ENCODE measurements at regions of chr5 and their contacts with region 1.

Region 1: GRCh38 chr5:5492087-5492933 is 69.8 kb downstream of the ICE1 start:
- DNase-seq: peak in 7 of 9 experiments; percentile 4 to 78 (median 38)
- ATAC-seq: peak; percentile 35
- H3K4me3 ChIP-seq: no peak overlapping the region
- H3K4me3 Mint-ChIP-seq: peak overlapping the region; percentile 66
- H3K27ac ChIP-seq: no peak overlapping the region
- H3K27ac Mint-ChIP-seq: no peak overlapping the region
- H3K4me1 ChIP-seq: peaks cover 17% of the 10 kb centered on the region
- H3K4me1 Mint-ChIP-seq: peaks cover 21% of the 10 kb centered on the region
- H3K27me3 ChIP-seq: no peaks in the 10 kb centered on the region
- H3K27me3 Mint-ChIP-seq: no peaks in the 10 kb centered on the region
- CTCF ChIP-seq: peak; percentile 81

Region 2: GRCh38 chr5:5523066-5523505 is 30.8 kb after region 1 on chr5:
- CTCF ChIA-PET with region 1: no interaction called
- POLR2A ChIA-PET with region 1: no interaction called
- intact Hi-C with region 1: loop called in 1 of 2 experiments (anchors 2 kb)
- DNase-seq: peak in 3 of 9 experiments; percentile 13 to 85 (median 74)
- ATAC-seq: peak; percentile 77
- H3K4me3 ChIP-seq: peak overlapping the region in 1 of 2 experiments; percentile 27
- H3K4me3 Mint-ChIP-seq: peak overlapping the region; percentile 78
- H3K27ac ChIP-seq: peak overlapping the region in 1 of 2 experiments; percentile 25
- H3K27ac Mint-ChIP-seq: peak overlapping the region; percentile 22
- H3K4me1 ChIP-seq: peaks cover 7% of the 10 kb centered on the region
- H3K4me1 Mint-ChIP-seq: peaks cover 12% of the 10 kb centered on the region
- H3K27me3 ChIP-seq: no peaks in the 10 kb centered on the region
- H3K27me3 Mint-ChIP-seq: peaks cover 2% of the 10 kb centered on the region
- CTCF ChIP-seq: no peak

Region 3: DNA sequence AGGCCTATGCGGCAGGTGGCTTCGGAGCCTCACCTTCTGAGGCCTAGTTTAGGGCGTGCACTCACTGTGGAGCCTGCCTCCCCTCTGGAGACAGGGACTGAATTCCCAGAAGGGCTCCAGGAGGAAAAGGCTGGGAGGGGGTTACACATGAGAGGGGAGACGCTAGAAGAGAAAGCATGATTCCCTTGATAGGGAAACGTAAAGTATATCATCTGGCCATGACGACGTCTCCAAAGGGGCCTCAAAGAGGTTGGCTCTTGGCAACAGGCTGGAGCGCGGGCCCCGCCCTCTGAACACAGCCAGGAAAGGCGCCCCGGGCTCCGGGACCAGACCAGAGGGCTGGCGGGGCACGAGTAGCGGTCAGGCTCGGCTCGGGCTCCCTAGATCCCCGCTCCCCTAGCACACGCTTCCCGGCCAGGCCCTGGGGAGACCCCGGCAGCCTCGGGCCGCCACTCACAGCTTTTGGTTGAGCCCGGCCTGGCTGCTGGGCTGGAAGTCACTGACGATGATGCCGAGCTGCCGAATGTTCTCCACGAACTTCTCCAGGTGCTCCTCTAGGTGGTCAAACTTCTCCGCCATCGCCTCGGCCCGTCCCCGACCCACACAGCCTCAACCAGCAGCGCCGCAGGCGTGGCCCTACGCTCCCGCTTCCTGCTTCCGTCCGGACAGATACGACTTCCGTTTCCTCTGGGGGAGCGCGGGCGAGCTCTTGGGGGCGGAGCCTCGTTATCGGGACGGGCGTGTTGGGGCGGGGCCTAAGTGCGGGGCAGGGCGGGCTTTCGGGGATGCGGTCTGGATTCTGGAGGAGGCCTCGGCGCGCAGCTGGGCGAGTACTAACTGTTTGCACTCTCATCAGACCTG is 885.8 kb after region 1 on chr5 and contains the start of gene MED10:
- CTCF ChIA-PET with region 1: no interaction called
- POLR2A ChIA-PET with region 1: interaction called, 3 read pairs
- intact Hi-C with region 1: loop called (anchors 5 to 10 kb)
- DNase-seq: peak; percentile 90 to 96 (median 95)
- ATAC-seq: peak; percentile 97
- H3K4me3 ChIP-seq: peak within 1 kb of the TSS; percentile 56 to 95
- H3K4me3 Mint-ChIP-seq: peak within 1 kb of the TSS; percentile 99
- H3K27ac ChIP-seq: peak within 1 kb of the TSS; percentile 77 to 90
- H3K27ac Mint-ChIP-seq: peak within 1 kb of the TSS; percentile 98
- H3K4me1 ChIP-seq: peaks cover 31% of the 10 kb centered on the region
- H3K4me1 Mint-ChIP-seq: peaks cover 47% of the 10 kb centered on the region
- H3K27me3 ChIP-seq: no peaks in the 10 kb centered on the region
- H3K27me3 Mint-ChIP-seq: no peaks in the 10 kb centered on the region
- CTCF ChIP-seq: no peak
- total RNA-seq, gene MED10: 110 to 112 TPM

Region 4: DNA sequence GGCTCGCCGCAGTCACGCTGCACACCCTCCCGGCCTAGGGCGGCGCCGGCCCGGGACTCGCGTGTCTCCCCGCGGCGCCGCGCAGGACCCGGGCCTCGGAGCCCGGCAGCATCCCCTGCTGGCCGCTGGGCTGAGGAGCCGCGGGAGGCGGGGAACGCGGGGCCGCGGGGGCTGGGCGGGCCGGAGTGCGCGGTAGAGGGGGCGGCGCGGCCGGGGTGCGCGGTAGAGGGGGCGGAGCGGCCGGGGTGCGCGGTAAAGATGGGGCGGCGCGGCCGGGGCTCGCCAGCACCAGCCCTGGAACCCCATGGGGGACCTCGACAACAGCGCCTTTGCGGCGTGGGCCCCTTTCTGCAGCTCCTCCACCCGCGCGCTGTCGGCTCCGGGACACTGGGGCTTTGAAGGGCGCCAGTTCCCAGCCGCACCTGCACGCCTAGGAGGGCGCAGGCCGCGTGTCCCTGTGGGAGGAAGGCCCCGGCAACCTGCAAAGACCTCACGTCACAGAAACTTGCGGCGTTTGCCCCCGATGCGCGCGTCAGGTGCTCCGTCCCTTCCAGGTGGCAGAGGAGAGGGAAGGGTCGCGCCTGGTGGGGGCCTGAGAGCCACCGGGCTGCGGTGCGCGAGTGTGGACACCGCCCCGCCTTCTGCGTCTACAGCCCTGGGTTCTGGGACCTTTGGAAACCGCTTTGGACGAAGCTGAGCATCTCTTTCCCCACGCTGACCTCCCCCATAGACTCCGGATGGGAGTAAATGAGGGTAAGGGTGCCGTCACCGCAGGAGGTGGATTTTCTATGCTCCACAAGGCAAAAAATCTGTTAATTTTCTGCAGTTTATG is 1091.0 kb after region 1 on chr5:
- CTCF ChIA-PET with region 1: no interaction called
- POLR2A ChIA-PET with region 1: no interaction called
- intact Hi-C with region 1: loop called in 1 of 2 experiments (anchors 10 kb)
- DNase-seq: peak in 2 of 9 experiments; percentile 20 to 33
- ATAC-seq: peak; percentile 58
- H3K4me3 ChIP-seq: no peak overlapping the region
- H3K4me3 Mint-ChIP-seq: no peak overlapping the region
- H3K27ac ChIP-seq: no peak overlapping the region
- H3K27ac Mint-ChIP-seq: no peak overlapping the region
- H3K4me1 ChIP-seq: no peaks in the 10 kb centered on the region
- H3K4me1 Mint-ChIP-seq: peaks cover 3% of the 10 kb centered on the region
- H3K27me3 ChIP-seq: peaks cover 0 to 6% of the 10 kb centered on the region in 2 experiments
- H3K27me3 Mint-ChIP-seq: peaks cover 55% of the 10 kb centered on the region
- CTCF ChIP-seq: no peak

Region 5: DNA sequence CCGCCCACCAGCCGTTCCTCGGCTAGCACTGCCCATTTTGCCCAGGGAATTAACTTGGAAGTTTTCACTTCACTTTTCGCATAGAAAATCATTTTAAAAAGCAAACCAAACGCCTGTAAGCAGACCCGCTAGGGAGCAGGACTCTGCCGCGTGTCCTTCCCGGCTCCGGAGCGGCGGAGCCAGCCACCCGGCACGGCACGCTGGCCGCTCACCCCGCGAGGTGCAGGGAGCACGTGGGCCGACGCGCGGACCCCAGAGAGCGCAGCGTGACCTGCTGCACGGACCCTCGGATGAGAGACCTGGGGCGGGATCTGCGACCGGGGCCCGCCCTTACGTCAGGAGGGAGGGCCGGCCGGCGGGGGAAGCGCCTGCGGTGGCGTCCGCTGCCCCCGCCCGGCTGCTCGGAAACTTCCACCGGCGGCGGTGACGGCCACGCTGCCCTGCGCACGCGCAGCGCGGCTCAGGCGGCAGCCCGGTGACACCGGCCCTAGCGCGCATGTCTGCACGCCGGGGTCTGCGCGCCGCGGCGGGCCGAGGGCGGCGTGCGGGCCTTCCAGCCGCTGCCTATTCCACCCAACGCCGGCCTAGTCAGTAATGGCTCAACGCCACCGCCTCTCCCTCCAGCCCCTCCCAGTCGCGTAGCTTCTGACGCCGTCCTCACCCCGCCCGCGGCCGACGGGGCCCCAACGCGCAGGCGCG is 1220.4 kb after region 1 on chr5:
- CTCF ChIA-PET with region 1: no interaction called
- POLR2A ChIA-PET with region 1: no interaction called
- intact Hi-C with region 1: loop called in 1 of 2 experiments (anchors 1 kb)
- DNase-seq: peak in 8 of 9 experiments; percentile 95 to 99 (median 96)
- ATAC-seq: peak; percentile 76
- H3K4me3 ChIP-seq: peak overlapping the region; percentile 83 to 91
- H3K4me3 Mint-ChIP-seq: peak overlapping the region; percentile 89
- H3K27ac ChIP-seq: peak overlapping the region; percentile 77 to 86
- H3K27ac Mint-ChIP-seq: peak overlapping the region; percentile 92
- H3K4me1 ChIP-seq: peaks cover 28% of the 10 kb centered on the region
- H3K4me1 Mint-ChIP-seq: peaks cover 39% of the 10 kb centered on the region
- H3K27me3 ChIP-seq: peaks cover 0 to 2% of the 10 kb centered on the region in 2 experiments
- H3K27me3 Mint-ChIP-seq: no peaks in the 10 kb centered on the region
- CTCF ChIP-seq: no peak